IMR-90 (cell line): ENCODE measurements at regions of chr2 and their contacts with region 1.

Region 1: DNA sequence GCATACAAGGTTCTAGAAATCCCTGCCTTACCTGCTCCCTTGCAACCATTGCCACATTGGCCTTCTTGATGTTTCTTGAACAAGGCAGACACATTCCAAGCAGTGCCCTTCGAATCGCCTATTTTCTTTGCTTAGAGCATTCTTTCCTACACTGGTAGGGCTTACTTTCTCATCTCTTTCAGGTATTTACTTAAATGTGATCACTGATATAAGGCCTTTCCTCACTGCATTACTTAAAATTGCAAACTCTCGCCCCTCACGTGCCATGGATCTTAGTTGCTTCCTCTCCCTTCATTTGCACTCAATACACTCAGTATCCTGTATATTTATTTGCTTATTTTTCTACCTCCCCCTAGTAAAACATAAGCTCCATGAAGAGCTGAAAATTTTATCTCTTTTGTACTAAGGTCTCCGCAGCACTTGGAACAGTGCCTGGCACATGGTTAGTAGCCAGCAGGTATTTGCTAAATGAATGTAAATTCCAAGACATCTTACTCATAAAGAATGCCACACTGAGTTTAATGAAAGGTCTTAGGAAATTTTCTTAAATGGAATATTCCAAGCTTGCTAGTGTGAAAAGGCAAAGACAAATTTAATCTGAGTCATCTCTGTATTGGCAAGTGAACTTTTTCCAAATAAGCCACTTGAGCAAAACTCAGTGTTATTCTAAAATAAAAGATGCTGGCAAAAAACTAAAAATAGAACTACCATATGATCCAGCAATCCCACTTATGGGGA is 42.4 kb upstream of the FIGN start:
- DNase-seq: peak; percentile 62
- ATAC-seq: peak; percentile 27
- H3K4me3 ChIP-seq: no peak overlapping the region
- H3K27ac ChIP-seq: no peak overlapping the region
- H3K4me1 ChIP-seq: no peaks in the 10 kb centered on the region
- H3K27me3 ChIP-seq: no peaks in the 10 kb centered on the region
- CTCF ChIP-seq: no peak
- POLR2A ChIP-seq: no peak
- RAD21 ChIP-seq: no peak

Region 2: DNA sequence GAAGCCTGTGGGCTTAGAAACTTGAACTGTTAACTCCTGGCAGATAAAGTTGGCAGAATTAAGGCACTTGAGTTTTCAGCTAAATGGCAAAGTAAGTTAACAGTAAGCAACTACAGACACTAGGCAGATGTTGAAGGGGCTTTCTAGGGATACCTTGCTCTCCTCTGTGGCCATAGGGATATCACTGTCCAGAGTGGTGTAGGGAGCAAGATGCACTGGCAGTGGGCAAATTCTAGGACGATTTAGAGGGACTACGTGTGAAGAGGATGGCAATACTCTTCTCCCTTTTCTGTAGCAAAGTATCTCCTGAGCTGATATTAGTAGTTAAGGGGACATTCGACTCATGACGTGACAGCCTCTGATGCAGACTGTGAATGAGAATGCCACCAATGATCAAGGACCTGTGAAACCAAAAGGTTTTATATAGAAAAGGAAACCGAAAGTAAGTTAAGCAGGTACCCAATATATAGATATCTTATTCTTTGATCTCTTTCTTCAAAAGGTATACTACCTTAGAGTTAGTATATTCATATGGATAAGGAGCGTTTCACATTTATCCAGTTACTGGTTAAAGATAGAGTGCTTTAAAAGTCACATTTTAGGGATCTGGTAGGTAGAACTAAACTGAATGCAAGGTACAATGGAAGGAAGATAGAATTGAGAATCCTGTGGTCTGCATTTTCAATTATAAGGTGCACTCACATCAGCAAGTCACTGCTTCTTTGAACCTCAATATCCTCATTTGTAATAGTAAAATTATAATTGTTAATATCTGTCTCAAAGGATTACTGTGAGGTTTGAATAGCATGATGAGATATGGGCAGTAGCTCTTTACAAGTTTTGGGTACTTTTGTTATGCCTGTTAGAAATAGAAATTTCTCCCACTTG is 1046.1 kb before region 1 on chr2:
- CTCF ChIA-PET with region 1: no interaction called
- POLR2A ChIA-PET with region 1: no interaction called
- dilution Hi-C with region 1: no loop called
- in situ Hi-C with region 1: no loop called
- intact Hi-C with region 1: no loop called
- DNase-seq: no peak
- ATAC-seq: no peak
- H3K4me3 ChIP-seq: no peak overlapping the region
- H3K27ac ChIP-seq: no peak overlapping the region
- H3K4me1 ChIP-seq: no peaks in the 10 kb centered on the region
- H3K27me3 ChIP-seq: no peaks in the 10 kb centered on the region
- CTCF ChIP-seq: no peak
- POLR2A ChIP-seq: no peak
- RAD21 ChIP-seq: no peak

Region 3: GRCh38 chr2:163198972-163199371 is 579.2 kb before region 1 on chr2:
- CTCF ChIA-PET with region 1: no interaction called
- POLR2A ChIA-PET with region 1: no interaction called
- dilution Hi-C with region 1: no loop called
- in situ Hi-C with region 1: no loop called
- intact Hi-C with region 1: loop called (anchors 5 kb)
- DNase-seq: no peak
- ATAC-seq: no peak
- H3K4me3 ChIP-seq: no peak overlapping the region
- H3K27ac ChIP-seq: no peak overlapping the region
- H3K4me1 ChIP-seq: no peaks in the 10 kb centered on the region
- H3K27me3 ChIP-seq: peaks cover 1% of the 10 kb centered on the region
- CTCF ChIP-seq: no peak
- POLR2A ChIP-seq: no peak
- RAD21 ChIP-seq: no peak

Region 4: GRCh38 chr2:163748420-163749166 is 29.6 kb before region 1 on chr2:
- CTCF ChIA-PET with region 1: no interaction called
- POLR2A ChIA-PET with region 1: no interaction called
- dilution Hi-C with region 1: no loop called
- in situ Hi-C with region 1: no loop called
- intact Hi-C with region 1: no loop called
- DNase-seq: no peak
- ATAC-seq: no peak
- H3K4me3 ChIP-seq: no peak overlapping the region
- H3K27ac ChIP-seq: no peak overlapping the region
- H3K4me1 ChIP-seq: no peaks in the 10 kb centered on the region
- H3K27me3 ChIP-seq: peaks cover 3% of the 10 kb centered on the region; the same call in 1 of the 2 replicates
- CTCF ChIP-seq: no peak
- POLR2A ChIP-seq: no peak
- RAD21 ChIP-seq: no peak